A549 (cell line): ENCODE measurements at regions of chr7 and their contacts with region 1.

Region 1: GRCh38 chr7:34321000-34321581 is 336.9 kb upstream of the NPSR1 start:
- DNase-seq: peak; percentile 78 to 82
- ATAC-seq: peak; percentile 95 to 98
- H3K4me3 ChIP-seq: peak overlapping the region; percentile 18; the same call in 1 of the 3 replicates
- H3K27ac ChIP-seq: peak overlapping the region; percentile 54 to 84
- H3K4me1 ChIP-seq: peaks cover 23% of the 10 kb centered on the region
- CTCF ChIP-seq: peak; percentile 91
- EP300 ChIP-seq: no peak
- POLR2A ChIP-seq: no peak
- RAD21 ChIP-seq: peak; percentile 89 to 92

Region 2: DNA sequence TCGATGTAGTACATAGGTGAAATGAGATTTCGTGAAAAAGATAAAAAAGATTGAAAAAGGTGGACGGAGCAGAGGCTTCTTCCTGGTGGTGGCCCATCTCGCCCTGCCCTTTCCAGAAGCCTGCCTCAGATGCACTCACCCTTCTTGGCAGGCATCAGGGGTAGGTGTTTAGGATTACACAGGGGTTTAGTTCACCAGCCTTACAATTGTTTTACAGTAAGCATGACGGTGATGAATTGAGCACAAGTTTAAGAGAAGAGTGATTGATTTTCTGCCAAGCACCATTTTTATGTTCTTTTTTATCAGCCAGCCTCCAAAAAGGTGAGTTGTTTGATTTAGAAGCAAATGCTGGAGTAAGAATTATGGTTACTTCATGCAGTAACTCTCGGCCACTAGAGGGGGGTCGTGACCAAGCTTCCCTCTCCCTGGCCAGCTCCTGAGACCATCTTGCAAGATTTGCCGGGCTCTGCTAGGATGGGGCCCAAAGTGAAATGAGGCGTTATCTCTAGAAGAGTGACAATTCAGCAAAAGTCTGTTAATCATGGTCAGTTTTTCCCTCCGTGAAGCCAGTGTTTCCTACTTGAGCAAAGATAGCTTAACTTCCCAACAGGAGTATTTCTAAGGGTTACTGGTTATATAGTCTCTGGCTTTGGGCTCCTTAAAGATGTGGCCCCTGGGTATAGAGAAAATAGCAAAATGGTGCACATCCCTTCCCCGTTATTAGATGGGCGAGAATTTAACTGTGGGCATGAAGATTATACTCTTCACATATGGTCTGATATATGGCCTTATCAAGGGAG is 186.9 kb before region 1 on chr7:
- CTCF ChIA-PET with region 1: interaction called, 24 read pairs
- POLR2A ChIA-PET with region 1: no interaction called
- DNase-seq: peak; percentile 64 to 76
- ATAC-seq: peak; percentile 83 to 95
- H3K4me3 ChIP-seq: no peak overlapping the region
- H3K27ac ChIP-seq: peak overlapping the region; percentile 35 to 75
- H3K4me1 ChIP-seq: peaks cover 23% of the 10 kb centered on the region; the same call in 2 of the 3 replicates
- CTCF ChIP-seq: peak; percentile 77
- EP300 ChIP-seq: no peak
- POLR2A ChIP-seq: no peak
- RAD21 ChIP-seq: peak; percentile 94

Region 3: GRCh38 chr7:34275624-34276023 is 45.5 kb before region 1 on chr7:
- CTCF ChIA-PET with region 1: no interaction called
- POLR2A ChIA-PET with region 1: no interaction called
- DNase-seq: no peak
- ATAC-seq: no peak
- H3K4me3 ChIP-seq: no peak overlapping the region
- H3K27ac ChIP-seq: no peak overlapping the region
- H3K4me1 ChIP-seq: peaks cover 3% of the 10 kb centered on the region; the same call in 1 of the 3 replicates
- CTCF ChIP-seq: no peak
- EP300 ChIP-seq: no peak
- POLR2A ChIP-seq: no peak
- RAD21 ChIP-seq: no peak

Region 4: DNA sequence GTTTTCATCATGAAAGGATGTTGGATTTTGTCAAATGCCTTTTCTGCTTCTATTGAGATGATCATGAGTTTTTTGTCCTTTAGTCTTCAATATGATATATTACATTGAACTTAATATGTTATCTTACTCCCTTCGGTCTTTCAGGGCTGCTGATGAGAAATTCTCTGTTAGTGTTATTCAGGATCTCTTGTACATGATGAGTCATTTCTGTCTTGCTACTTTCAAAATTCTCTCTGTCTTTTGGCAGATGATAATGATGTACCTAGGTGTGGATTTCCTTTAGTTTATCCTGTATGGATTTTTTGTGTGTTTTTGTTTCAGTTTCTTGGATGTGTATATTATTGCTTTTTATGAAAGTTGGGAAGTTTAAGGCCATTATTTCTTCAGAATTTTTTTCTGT is 16.1 kb after region 1 on chr7:
- CTCF ChIA-PET with region 1: interaction called, 24 read pairs
- POLR2A ChIA-PET with region 1: no interaction called
- DNase-seq: no peak
- ATAC-seq: no peak
- H3K4me3 ChIP-seq: no peak overlapping the region
- H3K27ac ChIP-seq: no peak overlapping the region
- H3K4me1 ChIP-seq: no peaks in the 10 kb centered on the region; the same call in 2 of the 3 replicates
- CTCF ChIP-seq: no peak
- EP300 ChIP-seq: no peak
- POLR2A ChIP-seq: no peak
- RAD21 ChIP-seq: no peak

Region 5: DNA sequence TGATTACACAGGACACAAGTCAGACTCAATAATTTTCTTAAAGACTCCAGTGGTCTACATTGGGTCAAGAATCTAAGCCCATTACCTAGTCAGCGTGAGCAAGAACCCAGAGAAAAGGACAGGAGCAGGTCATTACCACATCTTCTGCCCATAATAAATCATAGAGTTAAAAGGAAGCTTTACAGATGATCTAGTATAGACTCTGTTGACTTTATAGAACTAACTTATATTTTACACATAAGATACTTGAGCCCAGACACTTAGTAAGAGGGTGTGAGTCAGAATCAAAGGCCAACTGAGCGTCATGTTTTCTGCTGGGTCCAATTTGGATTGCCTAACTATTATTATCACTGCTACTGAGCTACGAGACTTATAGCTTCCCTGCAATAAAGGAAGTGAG is 130.8 kb after region 1 on chr7:
- CTCF ChIA-PET with region 1: interaction called, 10 read pairs
- POLR2A ChIA-PET with region 1: no interaction called
- DNase-seq: peak in 1 of 2 experiments; percentile 63
- ATAC-seq: peak; percentile 94 to 96
- H3K4me3 ChIP-seq: 0 out of 3 replicates have a peak overlapping the region, but pooled peaks have one; percentile 8
- H3K27ac ChIP-seq: peak overlapping the region; percentile 60 to 72; a peak in 5 of 6 replicates
- H3K4me1 ChIP-seq: peaks cover 27% of the 10 kb centered on the region
- CTCF ChIP-seq: no peak
- EP300 ChIP-seq: peak; percentile 72 to 78; a peak in 4 of 5 replicates
- POLR2A ChIP-seq: no peak
- RAD21 ChIP-seq: peak in 1 of 2 experiments; percentile 28; a peak in 1 of 5 replicates